Sigmoid colon (tissue), 7 donors: ENCODE measurements at regions of chr22 and their contacts with region 1.

Region 1: DNA sequence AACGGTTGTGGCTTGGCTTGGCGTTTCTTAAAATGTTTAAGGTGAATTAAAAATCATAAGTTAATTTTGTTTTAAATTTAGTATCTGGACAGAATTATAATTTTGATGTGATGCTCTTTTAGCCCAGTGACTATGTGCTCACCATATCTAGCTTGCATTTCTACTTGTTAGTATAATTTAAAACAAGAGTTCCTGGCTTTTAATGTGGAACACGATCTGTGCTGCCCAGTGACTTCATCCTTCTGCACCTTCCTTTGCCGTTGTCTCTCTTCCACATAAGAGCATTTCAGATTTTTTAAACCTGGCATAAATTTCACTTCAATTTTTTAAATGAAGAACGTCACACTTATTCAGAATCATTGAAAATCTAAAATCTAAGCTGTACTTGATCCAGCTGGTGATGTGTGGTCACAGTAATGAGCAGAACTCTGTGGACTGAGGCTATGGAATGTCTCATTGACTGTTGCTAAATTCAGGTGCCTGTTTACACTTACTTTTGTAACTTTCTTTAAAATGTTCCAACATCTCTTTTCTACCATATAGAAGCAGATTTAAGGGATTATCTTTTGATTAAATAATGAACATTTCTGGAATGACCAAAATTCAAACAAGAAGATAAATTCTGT is 75.4 kb upstream of the ADSL start:
- DNase-seq: no peak
- H3K4me3 ChIP-seq: no peak overlapping the region
- H3K27ac ChIP-seq: peak overlapping the region in 2 of 4 donors; percentile 28 to 33
- H3K4me1 ChIP-seq: peaks cover 0 to 7% (median 4%) of the 10 kb centered on the region in 4 donors
- H3K27me3 ChIP-seq: no peaks in the 10 kb centered on the region
- CTCF ChIP-seq: no peak
- EP300 ChIP-seq: no peak
- POLR2A ChIP-seq: no peak

Region 2: GRCh38 chr22:40220316-40221054 is 50.4 kb before region 1 on chr22:
- intact Hi-C with region 1: loop called (anchors 5 kb)
- DNase-seq: no peak
- H3K4me3 ChIP-seq: no peak overlapping the region
- H3K27ac ChIP-seq: peak overlapping the region; percentile 61 to 84 (median 73)
- H3K4me1 ChIP-seq: peaks cover 0 to 71% (median 58%) of the 10 kb centered on the region in 4 donors
- H3K27me3 ChIP-seq: no peaks in the 10 kb centered on the region
- CTCF ChIP-seq: no peak
- EP300 ChIP-seq: no peak
- POLR2A ChIP-seq: no peak

Region 3: GRCh38 chr22:40415531-40416266 is 144.8 kb after region 1 on chr22:
- intact Hi-C with region 1: no loop called
- DNase-seq: no peak
- H3K4me3 ChIP-seq: no peak overlapping the region
- H3K27ac ChIP-seq: peak overlapping the region in 2 of 4 donors; percentile 35 to 40
- H3K4me1 ChIP-seq: peaks cover 0 to 16% (median 7%) of the 10 kb centered on the region in 4 donors
- H3K27me3 ChIP-seq: no peaks in the 10 kb centered on the region
- CTCF ChIP-seq: no peak
- EP300 ChIP-seq: no peak
- POLR2A ChIP-seq: no peak